A549 (cell line): ENCODE measurements at regions of chr12 and their contacts with region 1.

Region 1: GRCh38 chr12:52980693-52981423 is 25.4 kb upstream of the EIF4B start:
- DNase-seq: peak; percentile 89 to 97
- ATAC-seq: peak; percentile 76 to 84
- H3K4me3 ChIP-seq: no peak overlapping the region
- H3K27ac ChIP-seq: peak overlapping the region; percentile 39 to 91
- H3K4me1 ChIP-seq: peaks cover 28% of the 10 kb centered on the region
- CTCF ChIP-seq: peak; percentile 100
- EP300 ChIP-seq: no peak
- POLR2A ChIP-seq: no peak
- RAD21 ChIP-seq: peak; percentile 100

Region 2: GRCh38 chr12:52147367-52147972 is 833.4 kb before region 1 on chr12:
- CTCF ChIA-PET with region 1: interaction called, 62 read pairs
- POLR2A ChIA-PET with region 1: interaction called, 3 read pairs
- DNase-seq: peak; percentile 96 to 100
- ATAC-seq: peak; percentile 46 to 71
- H3K4me3 ChIP-seq: no peak overlapping the region
- H3K27ac ChIP-seq: peak overlapping the region; percentile 100
- H3K4me1 ChIP-seq: peaks cover 93% of the 10 kb centered on the region
- CTCF ChIP-seq: no peak
- EP300 ChIP-seq: peak; percentile 97 to 99
- POLR2A ChIP-seq: no peak
- RAD21 ChIP-seq: peak in 1 of 2 experiments; percentile 42; a peak in 3 of 5 replicates

Region 3: GRCh38 chr12:52759695-52760094 is 221.2 kb before region 1 on chr12:
- CTCF ChIA-PET with region 1: no interaction called
- POLR2A ChIA-PET with region 1: no interaction called
- DNase-seq: peak in 1 of 2 experiments; percentile 16
- ATAC-seq: no peak; a peak in 1 of 6 replicates
- H3K4me3 ChIP-seq: no peak overlapping the region
- H3K27ac ChIP-seq: no peak overlapping the region
- H3K4me1 ChIP-seq: no peaks in the 10 kb centered on the region
- CTCF ChIP-seq: no peak
- EP300 ChIP-seq: no peak
- POLR2A ChIP-seq: no peak
- RAD21 ChIP-seq: 0 out of 5 replicates have a peak, but pooled peaks of 1 of the 2 experiments have one; percentile 25

Region 4: DNA sequence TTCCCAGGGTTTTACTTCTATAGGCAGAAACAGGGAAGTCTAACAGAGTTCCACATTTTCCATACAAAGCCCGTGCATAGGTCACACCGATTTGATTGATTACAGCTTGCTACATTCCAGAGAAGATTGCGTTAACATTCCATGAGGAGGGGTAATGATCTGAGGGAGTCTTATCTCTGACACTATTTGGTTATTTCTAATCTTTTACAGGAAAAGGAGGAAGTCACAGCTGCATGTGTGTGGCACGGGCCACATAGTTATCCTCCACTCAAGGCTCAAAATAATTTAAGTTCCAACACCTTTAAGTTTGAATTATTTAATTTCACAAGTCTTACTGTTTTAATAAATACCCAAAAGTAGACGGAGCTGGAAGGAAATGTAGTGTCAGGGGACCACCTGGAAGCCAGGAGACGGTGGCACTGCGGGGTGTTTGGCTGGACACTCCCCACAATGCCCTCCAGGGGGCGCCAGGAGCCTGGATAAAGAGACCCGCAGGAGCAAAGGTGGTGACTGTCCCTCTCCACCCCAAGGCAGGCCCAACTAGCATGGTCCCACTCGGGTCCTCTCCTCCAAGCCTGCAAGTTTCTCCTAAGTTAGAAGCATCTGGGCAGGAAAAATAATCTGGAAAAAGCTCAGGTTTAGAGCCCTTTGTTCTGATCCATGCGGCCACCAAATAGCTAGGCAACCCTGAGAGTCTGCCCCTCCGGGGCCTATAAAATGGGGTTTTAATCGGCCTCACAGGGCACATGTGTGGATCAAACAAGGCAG is 96.1 kb before region 1 on chr12:
- CTCF ChIA-PET with region 1: interaction called, 1,736 read pairs
- POLR2A ChIA-PET with region 1: interaction called, 15 read pairs
- DNase-seq: peak; percentile 74 to 82
- ATAC-seq: peak; percentile 62 to 65; a peak in 5 of 6 replicates
- H3K4me3 ChIP-seq: no peak overlapping the region
- H3K27ac ChIP-seq: peak overlapping the region; percentile 55 to 83
- H3K4me1 ChIP-seq: peaks cover 33% of the 10 kb centered on the region
- CTCF ChIP-seq: peak; percentile 98
- EP300 ChIP-seq: no peak
- POLR2A ChIP-seq: no peak
- RAD21 ChIP-seq: peak; percentile 100

Region 5: GRCh38 chr12:52913076-52913821 is 67.6 kb before region 1 on chr12:
- CTCF ChIA-PET with region 1: interaction called, 332 read pairs
- POLR2A ChIA-PET with region 1: no interaction called
- DNase-seq: no peak
- ATAC-seq: no peak
- H3K4me3 ChIP-seq: no peak overlapping the region
- H3K27ac ChIP-seq: peak overlapping the region in 1 of 2 experiments; percentile 68; a peak in 3 of 6 replicates
- H3K4me1 ChIP-seq: peaks cover 14% of the 10 kb centered on the region
- CTCF ChIP-seq: no peak
- EP300 ChIP-seq: no peak
- POLR2A ChIP-seq: no peak
- RAD21 ChIP-seq: no peak

Region 6: GRCh38 chr12:52949413-52950331 is 31.2 kb before region 1 on chr12:
- CTCF ChIA-PET with region 1: interaction called, 60 read pairs
- POLR2A ChIA-PET with region 1: interaction called, 3 read pairs
- DNase-seq: peak; percentile 87 to 95
- ATAC-seq: peak; percentile 75 to 82
- H3K4me3 ChIP-seq: peak overlapping the region; percentile 91
- H3K27ac ChIP-seq: peak overlapping the region; percentile 96 to 97
- H3K4me1 ChIP-seq: peaks cover 66% of the 10 kb centered on the region
- CTCF ChIP-seq: no peak
- EP300 ChIP-seq: 0 out of 5 replicates have a peak, but pooled peaks of 1 of the 2 experiments have one; percentile 16
- POLR2A ChIP-seq: peak; percentile 49
- RAD21 ChIP-seq: no peak

Region 7: GRCh38 chr12:52992699-52993557 is 12.1 kb after region 1 on chr12:
- CTCF ChIA-PET with region 1: interaction called, 125 read pairs
- POLR2A ChIA-PET with region 1: no interaction called
- DNase-seq: peak; percentile 86 to 92
- ATAC-seq: peak; percentile 94 to 98
- H3K4me3 ChIP-seq: no peak overlapping the region
- H3K27ac ChIP-seq: peak overlapping the region; percentile 89 to 93
- H3K4me1 ChIP-seq: peaks cover 50% of the 10 kb centered on the region
- CTCF ChIP-seq: no peak
- EP300 ChIP-seq: no peak
- POLR2A ChIP-seq: no peak
- RAD21 ChIP-seq: no peak

Region 8: DNA sequence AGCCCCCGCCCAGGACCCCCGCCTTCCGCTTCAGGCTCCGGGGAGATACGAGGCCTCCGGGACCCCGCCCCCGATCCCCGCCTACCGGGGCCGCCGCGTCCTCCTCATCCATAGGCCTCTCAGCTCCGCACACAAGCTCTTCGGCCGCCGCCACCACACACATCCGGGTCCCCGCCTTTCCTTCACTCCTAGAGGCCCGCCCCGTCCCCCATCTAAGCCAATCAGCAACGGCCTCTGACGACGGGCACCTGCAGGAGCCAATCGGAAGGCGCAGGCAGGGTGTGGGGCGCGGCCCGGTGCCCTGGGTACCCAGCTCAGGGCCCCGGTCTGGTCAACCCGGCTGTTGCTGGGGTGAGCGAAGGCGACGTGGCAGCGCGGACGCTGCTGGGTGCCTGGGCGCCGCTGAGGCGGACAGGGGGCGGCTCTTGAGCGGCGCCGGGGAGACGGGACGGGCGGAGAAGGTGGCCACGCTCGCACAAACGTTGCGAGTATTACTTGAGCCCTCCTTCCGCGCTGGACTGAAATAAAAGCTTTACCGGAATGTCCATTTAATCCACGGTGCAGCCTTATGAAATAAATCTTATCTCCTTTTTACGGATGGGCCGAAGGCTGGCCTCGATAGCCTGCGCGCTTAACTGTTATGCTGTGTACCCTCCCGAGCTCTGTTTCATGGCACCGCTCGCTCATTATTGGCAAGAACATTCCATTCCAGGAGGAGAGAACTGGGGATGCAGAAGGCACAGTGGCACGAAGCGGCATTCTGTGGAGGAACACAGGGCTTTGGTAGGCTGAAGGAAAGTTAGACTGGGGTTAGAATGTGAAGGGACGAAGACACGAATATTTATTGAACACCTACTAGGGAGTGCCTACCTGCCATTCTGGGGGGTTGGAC is 98.6 kb after region 1 on chr12 and contains the start of gene SPRYD3:
- CTCF ChIA-PET with region 1: no interaction called
- POLR2A ChIA-PET with region 1: no interaction called
- DNase-seq: peak; percentile 99 to 100
- ATAC-seq: peak; percentile 98 to 99
- H3K4me3 ChIP-seq: peak within 1 kb of the TSS; percentile 56
- H3K27ac ChIP-seq: peak within 1 kb of the TSS; percentile 86 to 94
- H3K4me1 ChIP-seq: peaks cover 10% of the 10 kb centered on the region; the same call in 2 of the 3 replicates
- CTCF ChIP-seq: no peak
- EP300 ChIP-seq: no peak
- POLR2A ChIP-seq: peak; percentile 99
- RAD21 ChIP-seq: no peak
- polyA plus RNA-seq, gene SPRYD3: 26.8 and 28.1 TPM in 2 replicates

Region 9: DNA sequence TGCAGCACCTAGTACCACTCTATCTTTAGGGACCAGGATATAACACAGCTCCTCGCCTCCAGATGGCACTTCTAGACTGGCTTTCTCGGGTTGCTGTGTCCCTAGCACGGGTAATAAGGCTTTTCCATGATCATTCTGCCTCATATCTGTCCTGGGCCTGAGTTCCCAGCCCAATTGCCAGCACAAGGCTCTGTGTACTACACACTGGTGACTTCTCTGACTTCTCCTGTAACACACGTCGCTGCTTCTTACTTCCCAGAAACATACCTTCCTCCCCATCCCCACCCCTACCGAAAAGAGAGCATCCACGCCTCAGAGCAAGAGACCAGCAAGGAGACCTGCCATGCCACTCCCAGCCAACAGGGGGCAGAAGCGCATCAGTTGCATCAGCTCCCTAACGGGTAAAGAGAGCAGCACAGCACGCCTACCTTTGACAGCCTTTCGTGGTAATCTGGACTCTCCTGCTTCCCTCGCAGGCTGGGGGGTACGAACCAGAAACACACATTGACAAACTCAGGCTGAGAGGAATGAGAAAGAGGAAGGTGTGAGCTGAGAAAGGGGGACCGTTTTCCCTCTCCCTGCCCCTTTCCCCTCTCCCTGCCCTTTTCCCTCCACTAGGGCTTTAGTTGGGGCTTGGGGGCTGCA is 178.5 kb after region 1 on chr12:
- CTCF ChIA-PET with region 1: no interaction called
- POLR2A ChIA-PET with region 1: no interaction called
- DNase-seq: peak; percentile 89 to 96
- ATAC-seq: peak; percentile 97 to 98
- H3K4me3 ChIP-seq: no peak overlapping the region
- H3K27ac ChIP-seq: peak overlapping the region; percentile 55 to 82
- H3K4me1 ChIP-seq: peaks cover 12% of the 10 kb centered on the region
- CTCF ChIP-seq: peak; percentile 93
- EP300 ChIP-seq: no peak
- POLR2A ChIP-seq: no peak
- RAD21 ChIP-seq: peak; percentile 89 to 93